ENCODE measurements at regions of chr12 and their contacts with region 1.

Region 1: DNA sequence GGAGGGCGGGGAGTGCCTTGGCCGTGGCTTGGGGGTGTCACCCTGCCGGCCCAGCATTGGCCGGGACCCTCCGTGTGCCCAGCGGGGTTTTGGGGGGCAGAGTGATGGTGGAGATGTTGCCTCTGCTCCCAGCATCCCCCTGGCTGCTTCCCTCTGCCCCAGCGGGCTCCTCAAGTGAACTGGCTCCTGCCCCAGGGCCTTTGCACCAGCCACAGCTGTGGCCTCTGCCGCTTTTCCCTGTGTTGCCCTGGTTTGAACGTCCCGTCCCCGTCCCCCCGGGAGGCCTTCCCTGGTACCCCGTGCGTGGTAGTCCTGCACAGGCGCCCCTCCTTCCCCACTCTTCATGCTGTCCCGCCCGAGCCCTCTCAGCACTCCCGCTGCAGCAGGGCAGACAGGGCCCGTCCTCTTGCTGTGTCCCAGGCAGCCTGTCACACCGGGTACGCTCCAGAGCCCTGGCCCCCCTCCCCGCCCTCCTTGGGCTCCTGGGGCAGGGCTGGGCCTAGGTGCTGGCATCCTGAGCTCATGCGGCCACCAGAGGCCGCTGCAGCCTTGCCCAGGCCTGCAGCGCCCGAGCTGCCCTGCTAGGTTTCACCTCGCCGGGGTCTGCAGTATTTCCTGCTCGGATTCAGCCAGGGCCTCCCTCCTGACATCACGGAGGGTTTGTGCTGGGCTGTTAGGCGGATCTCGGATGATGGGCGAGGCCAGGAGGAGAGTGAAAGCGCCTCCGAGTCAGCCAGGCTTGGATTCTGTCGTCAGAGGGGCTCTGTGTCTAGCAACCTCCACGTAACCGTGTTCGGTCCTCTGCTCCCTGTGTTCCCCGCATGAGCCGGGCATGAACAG is 9.5 kb downstream of the NOC4L start:
- DNase-seq: peak; percentile 76
- H3K4me3 ChIP-seq: no peak overlapping the region
- H3K27ac ChIP-seq: no peak overlapping the region
- H3K4me1 ChIP-seq: no peaks in the 10 kb centered on the region
- CTCF ChIP-seq: peak; percentile 86

Region 2: GRCh38 chr12:132170094-132170636 is 16.4 kb after region 1 on chr12:
- CTCF ChIA-PET with region 1: no interaction called
- POLR2A ChIA-PET with region 1: no interaction called
- intact Hi-C with region 1: no loop called
- DNase-seq: no peak
- H3K4me3 ChIP-seq: no peak overlapping the region
- H3K27ac ChIP-seq: no peak overlapping the region
- H3K4me1 ChIP-seq: peaks cover 6% of the 10 kb centered on the region
- CTCF ChIP-seq: no peak

Region 3: GRCh38 chr12:132218915-132219314 is 65.2 kb after region 1 on chr12:
- CTCF ChIA-PET with region 1: no interaction called
- POLR2A ChIA-PET with region 1: no interaction called
- intact Hi-C with region 1: loop called (anchors 1 kb)
- DNase-seq: peak; percentile 55
- H3K4me3 ChIP-seq: no peak overlapping the region
- H3K27ac ChIP-seq: no peak overlapping the region
- H3K4me1 ChIP-seq: peaks cover 9% of the 10 kb centered on the region
- CTCF ChIP-seq: peak; percentile 72

Measured in OCI-LY7 (cell line).